PC-3 (cell line): ENCODE measurements at regions of chr5 and their contacts with region 1.

Region 1: DNA sequence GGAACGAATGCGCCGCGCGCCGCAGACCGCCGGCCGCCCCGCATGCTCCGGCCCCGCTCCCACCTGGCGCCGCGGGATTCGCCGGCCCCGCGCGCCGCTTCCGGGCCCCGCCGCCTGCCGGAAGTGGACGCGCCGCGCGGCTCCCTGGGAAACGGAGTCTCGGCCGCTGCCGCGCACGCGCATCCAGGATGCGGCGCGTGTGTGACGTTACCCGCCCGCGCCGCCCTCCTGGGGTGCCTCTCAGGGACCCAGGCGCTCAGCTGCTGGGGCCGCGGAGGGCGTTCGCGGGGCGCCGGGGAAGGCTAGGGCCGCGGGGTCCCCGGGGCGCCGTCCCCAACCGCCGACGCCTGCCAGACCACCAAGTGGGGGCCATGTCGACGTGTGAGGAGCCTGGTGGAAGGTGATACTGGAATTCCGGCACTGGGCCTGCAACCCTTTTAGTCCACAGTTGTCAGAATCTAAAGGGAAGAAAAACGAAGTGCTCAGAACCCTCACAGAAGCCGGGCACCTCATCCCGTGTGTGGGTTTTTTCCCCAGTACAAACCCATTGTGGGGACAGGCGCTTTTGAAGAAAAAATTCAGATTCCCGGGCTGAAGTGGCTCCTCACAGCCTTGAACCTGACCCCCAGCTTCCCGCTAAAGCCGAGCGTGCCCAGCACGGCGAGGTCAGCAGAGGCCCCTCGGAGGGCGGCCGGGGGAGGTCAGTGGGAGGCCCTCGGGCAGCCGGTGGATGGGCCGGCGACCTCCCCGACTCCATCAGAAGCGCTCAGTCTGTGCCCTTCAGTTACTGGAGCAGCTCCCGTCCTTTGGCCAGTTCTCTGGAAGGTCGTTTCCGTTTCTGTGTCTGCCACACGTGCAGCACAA is at the start of gene CLPTM1L:
- DNase-seq: peak; percentile 91
- ATAC-seq: peak; percentile 88
- H3K4me3 ChIP-seq: peak within 1 kb of the TSS; percentile 100
- H3K27ac ChIP-seq: no peak within 1 kb of the TSS; the same call in 1 of the 2 replicates
- H3K4me1 ChIP-seq: peaks cover 11% of the 10 kb centered on the region
- H3K27me3 ChIP-seq: no peaks in the 10 kb centered on the region
- CTCF ChIP-seq: no peak
- total RNA-seq, gene CLPTM1L: 373 and 463 TPM in 2 replicates

Region 2: GRCh38 chr5:1227669-1228068 is 117.5 kb before region 1 on chr5:
- CTCF ChIA-PET with region 1: no interaction called
- POLR2A ChIA-PET with region 1: no interaction called
- intact Hi-C with region 1: loop called (anchors 5 kb)
- DNase-seq: peak; percentile 85
- ATAC-seq: peak; percentile 97
- H3K4me3 ChIP-seq: peak overlapping the region; percentile 2; the same call in 1 of the 2 replicates
- H3K27ac ChIP-seq: no peak overlapping the region
- H3K4me1 ChIP-seq: peaks cover 13% of the 10 kb centered on the region
- H3K27me3 ChIP-seq: peaks cover 7% of the 10 kb centered on the region; the same call in 1 of the 2 replicates
- CTCF ChIP-seq: no peak